ENCODE measurements at regions of chr3 and their contacts with region 1.

Region 1: GRCh38 chr3:149771652-149772271 is 19.5 kb upstream of the COMMD2 start:
- DNase-seq: peak; percentile 25
- ATAC-seq: peak; percentile 70; the same call in 1 of the 2 replicates
- H3K4me3 ChIP-seq: no peak overlapping the region
- H3K27ac ChIP-seq: no peak overlapping the region
- H3K4me1 ChIP-seq: no peaks in the 10 kb centered on the region
- H3K27me3 ChIP-seq: peaks cover 13% of the 10 kb centered on the region
- CTCF ChIP-seq: peak; percentile 67
- POLR2A ChIP-seq: no peak
- RAD21 ChIP-seq: peak; percentile 67

Region 2: GRCh38 chr3:149585401-149585726 is 186.4 kb before region 1 on chr3:
- CTCF ChIA-PET with region 1: no interaction called
- POLR2A ChIA-PET with region 1: no interaction called
- dilution Hi-C with region 1: no loop called
- in situ Hi-C with region 1: no loop called
- intact Hi-C with region 1: no loop called
- DNase-seq: no peak
- ATAC-seq: no peak
- H3K4me3 ChIP-seq: no peak overlapping the region
- H3K27ac ChIP-seq: no peak overlapping the region
- H3K4me1 ChIP-seq: peaks cover 17% of the 10 kb centered on the region
- H3K27me3 ChIP-seq: no peaks in the 10 kb centered on the region
- CTCF ChIP-seq: no peak
- POLR2A ChIP-seq: no peak
- RAD21 ChIP-seq: no peak

Region 3: GRCh38 chr3:149752051-149752787 is 19.5 kb before region 1 on chr3 and contains the start of gene COMMD2:
- CTCF ChIA-PET with region 1: interaction called, 14 read pairs
- POLR2A ChIA-PET with region 1: no interaction called
- dilution Hi-C with region 1: no loop called
- in situ Hi-C with region 1: no loop called
- intact Hi-C with region 1: no loop called
- DNase-seq: peak; percentile 85
- ATAC-seq: peak; percentile 99
- H3K4me3 ChIP-seq: peak within 1 kb of the TSS; percentile 66
- H3K27ac ChIP-seq: peak within 1 kb of the TSS; percentile 48
- H3K4me1 ChIP-seq: 0 out of 2 replicates have a peak, but pooled peaks cover 2% of the 10 kb centered on the region
- H3K27me3 ChIP-seq: peaks cover 2% of the 10 kb centered on the region; the same call in 1 of the 2 replicates
- CTCF ChIP-seq: peak; percentile 31
- POLR2A ChIP-seq: no peak
- RAD21 ChIP-seq: peak; percentile 42; the same call in 1 of the 2 replicates
- total RNA-seq, gene COMMD2: 31.9 and 46.1 TPM in 2 replicates

Region 4: GRCh38 chr3:150327678-150328637 is 556.2 kb after region 1 on chr3:
- CTCF ChIA-PET with region 1: interaction called, 10 read pairs
- POLR2A ChIA-PET with region 1: no interaction called
- dilution Hi-C with region 1: no loop called
- in situ Hi-C with region 1: no loop called
- intact Hi-C with region 1: no loop called
- DNase-seq: no peak
- ATAC-seq: no peak
- H3K4me3 ChIP-seq: no peak overlapping the region
- H3K27ac ChIP-seq: no peak overlapping the region
- H3K4me1 ChIP-seq: peaks cover 10% of the 10 kb centered on the region
- H3K27me3 ChIP-seq: no peaks in the 10 kb centered on the region; the same call in 1 of the 2 replicates
- CTCF ChIP-seq: no peak
- POLR2A ChIP-seq: no peak
- RAD21 ChIP-seq: no peak

Measured in IMR-90 (cell line).